Transverse colon (tissue), 4 donors: ENCODE measurements at regions of chr2 and their contacts with region 1.

Region 1: DNA sequence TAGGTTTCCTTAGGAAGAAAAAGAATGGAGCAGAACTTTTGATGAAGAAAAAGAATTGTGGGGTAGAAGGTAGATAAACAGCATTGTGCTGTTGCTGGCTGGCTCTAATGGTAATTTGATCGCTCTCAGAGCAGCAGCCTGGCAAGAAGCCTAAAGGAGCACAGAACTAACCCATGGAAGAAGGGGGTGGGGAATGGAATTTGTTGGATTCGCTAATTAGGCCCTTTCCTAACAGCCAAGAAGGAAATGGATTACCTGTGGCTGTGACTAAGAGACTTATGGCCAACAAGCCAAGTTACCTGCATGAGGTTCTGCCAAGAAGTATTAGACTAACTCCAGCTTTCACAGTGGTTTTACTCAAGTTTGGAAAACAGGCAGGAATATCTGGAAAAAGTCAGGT is 210.6 kb downstream of the IKZF2 start:
- DNase-seq: peak; percentile 42
- H3K4me3 ChIP-seq: no peak overlapping the region
- H3K27ac ChIP-seq: peak overlapping the region; percentile 30 to 66 (median 56)
- H3K4me1 ChIP-seq: peaks cover 0 to 16% (median 10%) of the 10 kb centered on the region in 4 donors
- H3K27me3 ChIP-seq: no peaks in the 10 kb centered on the region
- CTCF ChIP-seq: no peak
- EP300 ChIP-seq: no peak
- POLR2A ChIP-seq: no peak

Region 2: DNA sequence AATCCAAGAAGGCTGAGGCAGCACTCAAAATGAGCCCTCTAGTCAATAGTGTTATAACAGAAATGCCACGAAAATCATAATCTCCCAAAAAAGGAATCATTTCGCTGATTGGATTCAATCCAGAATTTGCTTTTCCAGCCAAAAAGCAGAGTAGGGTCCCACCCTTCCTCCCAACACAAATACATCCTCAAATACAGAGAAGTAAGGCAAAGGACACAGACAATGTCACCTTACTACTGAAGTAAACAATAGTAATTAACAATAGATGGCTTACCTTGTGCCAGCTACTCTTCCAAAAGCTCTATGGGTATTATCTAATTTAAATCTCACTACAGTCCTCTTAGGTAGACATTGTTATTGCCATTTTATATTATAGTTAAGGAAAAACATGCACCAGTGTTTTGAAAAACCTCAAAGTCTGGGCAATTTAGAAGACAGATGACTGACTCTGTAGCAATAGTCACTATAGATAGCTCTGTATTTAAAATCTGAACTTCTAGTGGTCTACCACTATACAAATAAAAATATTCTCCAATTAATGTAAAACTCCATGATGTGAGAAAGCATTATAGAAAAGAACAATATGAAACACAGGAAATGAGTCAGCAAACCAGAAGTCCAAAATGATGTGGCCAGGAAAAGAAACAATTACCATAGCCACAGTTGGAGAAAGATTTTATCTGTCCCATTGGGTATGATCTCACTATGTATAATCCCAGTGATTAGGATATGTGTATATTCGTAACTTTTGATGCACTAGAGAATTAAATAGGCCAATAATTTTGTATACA is 97.2 kb before region 1 on chr2:
- in situ Hi-C with region 1: loop called in 1 of 4 experiments (anchors 25 kb)
- intact Hi-C with region 1: no loop called
- DNase-seq: no peak
- H3K4me3 ChIP-seq: no peak overlapping the region
- H3K27ac ChIP-seq: no peak overlapping the region
- H3K4me1 ChIP-seq: no peaks in the 10 kb centered on the region
- H3K27me3 ChIP-seq: no peaks in the 10 kb centered on the region
- CTCF ChIP-seq: no peak
- EP300 ChIP-seq: no peak
- POLR2A ChIP-seq: no peak

Region 3: GRCh38 chr2:212870574-212870973 is 70.2 kb before region 1 on chr2:
- in situ Hi-C with region 1: no loop called
- intact Hi-C with region 1: no loop called
- DNase-seq: no peak
- H3K4me3 ChIP-seq: no peak overlapping the region
- H3K27ac ChIP-seq: no peak overlapping the region
- H3K4me1 ChIP-seq: no peaks in the 10 kb centered on the region
- H3K27me3 ChIP-seq: no peaks in the 10 kb centered on the region
- CTCF ChIP-seq: no peak
- EP300 ChIP-seq: no peak
- POLR2A ChIP-seq: no peak

Region 4: GRCh38 chr2:212968280-212968679 is 27.5 kb after region 1 on chr2:
- in situ Hi-C with region 1: no loop called
- intact Hi-C with region 1: no loop called
- DNase-seq: no peak
- H3K4me3 ChIP-seq: no peak overlapping the region
- H3K27ac ChIP-seq: no peak overlapping the region
- H3K4me1 ChIP-seq: no peaks in the 10 kb centered on the region
- H3K27me3 ChIP-seq: no peaks in the 10 kb centered on the region
- CTCF ChIP-seq: no peak
- EP300 ChIP-seq: no peak
- POLR2A ChIP-seq: no peak

Region 5: GRCh38 chr2:213104092-213104902 is 163.5 kb after region 1 on chr2:
- in situ Hi-C with region 1: no loop called
- intact Hi-C with region 1: no loop called
- DNase-seq: no peak
- H3K4me3 ChIP-seq: no peak overlapping the region
- H3K27ac ChIP-seq: peak overlapping the region in 2 of 4 donors; percentile 4 to 8
- H3K4me1 ChIP-seq: peaks cover 0 to 22% (median 6%) of the 10 kb centered on the region in 4 donors
- H3K27me3 ChIP-seq: no peaks in the 10 kb centered on the region
- CTCF ChIP-seq: no peak
- EP300 ChIP-seq: no peak
- POLR2A ChIP-seq: no peak